CD4-positive, alpha-beta memory T cell (primary cell): ENCODE measurements at regions of chr16 and their contacts with region 1.

Region 1: DNA sequence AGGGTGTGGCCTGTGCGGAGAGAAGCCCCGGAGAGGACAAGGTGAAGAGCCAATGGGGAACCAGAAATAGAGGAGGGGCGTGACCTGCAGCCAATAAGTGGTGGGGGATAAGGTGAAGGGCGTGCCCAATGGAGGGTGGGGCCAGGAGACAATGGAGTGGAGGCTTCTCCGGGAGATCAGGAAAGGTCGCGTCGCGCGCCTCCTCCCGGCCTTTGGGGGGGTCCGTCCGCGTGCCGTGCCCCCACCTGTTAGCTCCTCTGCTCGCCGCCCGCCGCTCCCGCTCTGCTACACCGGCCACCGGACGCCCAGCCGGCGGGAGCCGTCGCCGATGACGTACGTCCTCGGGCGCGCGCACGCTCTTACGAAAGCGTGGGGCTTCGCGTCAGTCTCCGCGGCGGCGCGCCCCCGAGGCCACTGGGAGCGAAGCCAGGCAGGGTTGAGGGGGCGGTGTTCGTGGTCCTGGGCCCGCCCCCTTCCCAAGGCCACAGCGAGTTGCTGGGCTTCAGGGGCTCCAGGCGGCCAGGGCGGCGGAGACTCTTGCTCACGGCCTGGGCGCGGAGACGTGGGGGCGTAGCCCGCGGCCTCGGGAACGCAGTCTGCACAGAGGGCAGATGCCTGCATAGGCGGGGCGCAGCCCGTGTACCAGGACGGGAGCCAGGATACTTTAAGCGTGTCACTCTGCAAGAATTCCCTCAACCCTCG is at the start of gene MATCAP1:
- DNase-seq: peak; percentile 95 to 98 (median 97)
- H3K4me3 ChIP-seq: peak within 1 kb of the TSS; percentile 65 to 85
- H3K4me3 Mint-ChIP-seq: peak within 1 kb of the TSS; percentile 54 to 96 (median 68)
- H3K27ac ChIP-seq: peak within 1 kb of the TSS; percentile 91
- H3K27ac Mint-ChIP-seq: peak within 1 kb of the TSS in 6 of 7 donors; percentile 15 to 98 (median 66)
- H3K4me1 ChIP-seq: peaks cover 25% of the 10 kb centered on the region
- H3K4me1 Mint-ChIP-seq: peaks cover 8 to 17% (median 11%) of the 10 kb centered on the region in 4 donors
- H3K27me3 ChIP-seq: no peaks in the 10 kb centered on the region
- H3K27me3 Mint-ChIP-seq: peaks cover 0 to 2% of the 10 kb centered on the region in 2 donors
- total RNA-seq, gene MATCAP1: 8.6 to 9.0 TPM

Region 2: GRCh38 chr16:66977341-66978113 is 206.3 kb before region 1 on chr16:
- CTCF ChIA-PET with region 1: interaction called, 8 read pairs
- POLR2A ChIA-PET with region 1: interaction called, 5 read pairs
- intact Hi-C with region 1: loop called (anchors 1 kb)
- DNase-seq: peak; percentile 80 to 83 (median 81)
- H3K4me3 ChIP-seq: no peak overlapping the region
- H3K4me3 Mint-ChIP-seq: peak overlapping the region in 1 of 8 donors; percentile 46
- H3K27ac ChIP-seq: no peak overlapping the region
- H3K27ac Mint-ChIP-seq: peak overlapping the region in 2 of 7 donors; percentile 2 to 42
- H3K4me1 ChIP-seq: peaks cover 14% of the 10 kb centered on the region
- H3K4me1 Mint-ChIP-seq: peaks cover 11 to 23% (median 17%) of the 10 kb centered on the region in 4 donors
- H3K27me3 ChIP-seq: no peaks in the 10 kb centered on the region
- H3K27me3 Mint-ChIP-seq: peaks cover 0 to 3% of the 10 kb centered on the region in 2 donors

Region 3: GRCh38 chr16:67055712-67056487 is 127.9 kb before region 1 on chr16:
- CTCF ChIA-PET with region 1: no interaction called
- POLR2A ChIA-PET with region 1: no interaction called
- intact Hi-C with region 1: no loop called
- DNase-seq: no peak
- H3K4me3 ChIP-seq: no peak overlapping the region
- H3K4me3 Mint-ChIP-seq: peak overlapping the region in 4 of 8 donors; percentile 17 to 63 (median 27)
- H3K27ac ChIP-seq: no peak overlapping the region
- H3K27ac Mint-ChIP-seq: peak overlapping the region; percentile 4 to 89 (median 72)
- H3K4me1 ChIP-seq: peaks cover 50% of the 10 kb centered on the region
- H3K4me1 Mint-ChIP-seq: peaks cover 41 to 61% (median 50%) of the 10 kb centered on the region in 4 donors
- H3K27me3 ChIP-seq: no peaks in the 10 kb centered on the region
- H3K27me3 Mint-ChIP-seq: no peaks in the 10 kb centered on the region

Region 4: DNA sequence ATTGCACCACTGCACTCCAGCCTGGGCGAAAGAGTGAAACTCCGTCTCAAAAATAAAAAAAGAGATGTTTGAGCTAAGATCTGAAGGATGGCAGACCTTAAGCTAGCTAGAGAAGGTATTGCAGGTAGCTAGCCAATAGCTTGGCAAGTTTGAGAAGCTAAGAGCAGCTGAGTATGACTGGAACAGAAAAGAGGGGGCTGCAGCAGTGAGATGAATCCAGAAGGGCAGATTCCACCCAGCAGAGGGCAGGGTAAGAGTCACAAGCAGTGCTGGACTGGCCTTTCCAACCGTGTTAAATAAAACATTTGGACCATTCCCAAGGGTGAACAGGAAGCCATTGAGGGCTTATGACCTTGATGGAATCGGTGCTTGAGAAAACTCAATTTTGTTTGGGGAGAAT is 79.7 kb before region 1 on chr16:
- CTCF ChIA-PET with region 1: interaction called, 12 read pairs
- POLR2A ChIA-PET with region 1: no interaction called
- intact Hi-C with region 1: loop called (anchors 2 kb)
- DNase-seq: no peak
- H3K4me3 ChIP-seq: no peak overlapping the region
- H3K4me3 Mint-ChIP-seq: no peak overlapping the region
- H3K27ac ChIP-seq: no peak overlapping the region
- H3K27ac Mint-ChIP-seq: peak overlapping the region in 3 of 7 donors; percentile 7 to 47 (median 19)
- H3K4me1 ChIP-seq: peaks cover 3% of the 10 kb centered on the region
- H3K4me1 Mint-ChIP-seq: peaks cover 0 to 6% (median 0%) of the 10 kb centered on the region in 4 donors
- H3K27me3 ChIP-seq: no peaks in the 10 kb centered on the region
- H3K27me3 Mint-ChIP-seq: no peaks in the 10 kb centered on the region

Region 5: DNA sequence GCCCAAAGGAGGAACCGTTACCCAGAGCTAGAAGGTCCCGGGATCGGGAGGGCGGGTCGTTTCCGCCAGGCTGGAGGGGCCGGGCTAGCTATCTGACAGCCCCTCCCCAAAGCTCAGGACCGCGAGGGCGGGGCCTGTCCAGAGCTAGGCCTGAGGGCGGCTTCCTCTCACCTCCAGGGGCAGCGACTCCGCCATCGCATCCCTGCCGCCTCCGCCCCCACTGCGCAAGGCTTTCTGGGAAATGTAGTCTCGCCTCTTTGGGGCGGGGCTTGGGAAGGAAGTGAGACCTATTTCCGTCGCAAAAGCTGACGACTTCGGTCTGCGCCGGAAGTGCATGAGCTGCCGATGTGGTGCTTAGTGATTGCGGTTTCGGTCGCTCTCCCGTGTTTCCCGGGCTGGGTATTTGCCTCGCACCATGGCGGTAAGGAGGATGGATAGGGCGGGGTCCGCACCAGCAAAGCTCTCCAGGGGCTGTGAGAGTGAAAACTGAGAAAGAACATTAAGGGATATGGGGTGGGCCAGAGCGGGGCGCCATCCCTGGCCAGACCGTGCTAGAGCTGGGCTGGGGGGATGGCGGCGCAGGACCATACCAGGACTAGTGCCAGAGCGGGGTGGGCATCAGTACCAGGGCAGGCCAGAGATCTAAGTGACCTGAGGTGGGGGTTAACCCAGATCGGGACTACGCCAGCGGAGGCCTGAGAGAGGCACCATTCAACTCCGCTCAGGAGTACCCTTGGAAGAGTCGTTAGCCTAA is 43.2 kb after region 1 on chr16 and contains the start of gene TMEM208:
- CTCF ChIA-PET with region 1: interaction called, 3 read pairs
- POLR2A ChIA-PET with region 1: interaction called, 5 read pairs
- intact Hi-C with region 1: loop called (anchors 2 kb)
- DNase-seq: peak; percentile 95 to 99 (median 97)
- H3K4me3 ChIP-seq: peak within 1 kb of the TSS; percentile 73 to 99
- H3K4me3 Mint-ChIP-seq: peak within 1 kb of the TSS; percentile 98 to 100 (median 100)
- H3K27ac ChIP-seq: peak within 1 kb of the TSS; percentile 88
- H3K27ac Mint-ChIP-seq: peak within 1 kb of the TSS; percentile 96 to 100 (median 99)
- H3K4me1 ChIP-seq: peaks cover 51% of the 10 kb centered on the region
- H3K4me1 Mint-ChIP-seq: peaks cover 43 to 58% (median 54%) of the 10 kb centered on the region in 4 donors
- H3K27me3 ChIP-seq: no peaks in the 10 kb centered on the region
- H3K27me3 Mint-ChIP-seq: no peaks in the 10 kb centered on the region
- total RNA-seq, gene TMEM208: 35.5 to 35.7 TPM

Region 6: DNA sequence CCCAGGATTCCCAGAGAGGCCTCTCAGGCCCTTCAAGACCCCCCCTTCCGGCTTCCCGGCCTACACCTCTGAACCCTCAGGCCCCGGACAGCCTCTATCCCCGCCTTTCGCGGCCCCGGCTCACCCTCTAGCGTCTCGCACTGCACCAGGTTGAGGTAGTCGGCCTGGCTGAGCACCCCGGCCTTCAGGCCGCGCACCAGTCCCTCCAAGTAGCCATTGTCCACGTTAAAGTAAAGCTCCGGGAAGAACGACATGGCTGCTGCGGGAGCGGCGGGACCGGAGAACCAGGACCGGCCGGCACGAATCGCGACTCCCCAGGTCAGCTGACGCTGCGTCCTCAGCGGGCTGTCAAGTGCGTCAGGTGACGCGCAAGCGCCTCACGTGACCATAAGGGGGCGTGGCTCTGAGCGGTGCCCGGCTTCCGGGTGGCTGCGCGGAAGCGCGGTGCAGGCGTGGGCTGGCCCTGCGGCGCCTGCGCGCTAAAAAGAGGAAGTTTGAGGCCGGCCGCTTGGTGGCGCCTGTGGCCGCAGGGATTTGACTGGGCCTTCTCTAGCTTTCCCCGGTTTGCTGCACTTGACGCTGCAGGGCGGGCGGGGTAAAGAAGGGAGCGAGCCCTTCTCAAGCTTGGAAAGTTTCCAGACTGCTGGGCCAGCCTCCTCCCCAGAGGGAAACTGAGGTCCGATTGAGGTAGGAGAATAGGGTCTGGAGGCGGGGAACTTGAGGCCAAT is 297.2 kb after region 1 on chr16 and contains the start of gene ATP6V0D1:
- CTCF ChIA-PET with region 1: no interaction called
- POLR2A ChIA-PET with region 1: no interaction called
- intact Hi-C with region 1: loop called (anchors 1 kb)
- DNase-seq: peak; percentile 97 to 99 (median 98)
- H3K4me3 ChIP-seq: peak within 1 kb of the TSS; percentile 97 to 99
- H3K4me3 Mint-ChIP-seq: peak within 1 kb of the TSS; percentile 94 to 100 (median 99)
- H3K27ac ChIP-seq: peak within 1 kb of the TSS; percentile 99
- H3K27ac Mint-ChIP-seq: peak within 1 kb of the TSS; percentile 97 to 100 (median 98)
- H3K4me1 ChIP-seq: peaks cover 43% of the 10 kb centered on the region
- H3K4me1 Mint-ChIP-seq: peaks cover 25 to 65% (median 44%) of the 10 kb centered on the region in 4 donors
- H3K27me3 ChIP-seq: no peaks in the 10 kb centered on the region
- H3K27me3 Mint-ChIP-seq: no peaks in the 10 kb centered on the region
- total RNA-seq, gene ATP6V0D1: 42.8 to 49.0 TPM